ENCODE measurements at regions of chr20 and their contacts with region 1.

Region 1: DNA sequence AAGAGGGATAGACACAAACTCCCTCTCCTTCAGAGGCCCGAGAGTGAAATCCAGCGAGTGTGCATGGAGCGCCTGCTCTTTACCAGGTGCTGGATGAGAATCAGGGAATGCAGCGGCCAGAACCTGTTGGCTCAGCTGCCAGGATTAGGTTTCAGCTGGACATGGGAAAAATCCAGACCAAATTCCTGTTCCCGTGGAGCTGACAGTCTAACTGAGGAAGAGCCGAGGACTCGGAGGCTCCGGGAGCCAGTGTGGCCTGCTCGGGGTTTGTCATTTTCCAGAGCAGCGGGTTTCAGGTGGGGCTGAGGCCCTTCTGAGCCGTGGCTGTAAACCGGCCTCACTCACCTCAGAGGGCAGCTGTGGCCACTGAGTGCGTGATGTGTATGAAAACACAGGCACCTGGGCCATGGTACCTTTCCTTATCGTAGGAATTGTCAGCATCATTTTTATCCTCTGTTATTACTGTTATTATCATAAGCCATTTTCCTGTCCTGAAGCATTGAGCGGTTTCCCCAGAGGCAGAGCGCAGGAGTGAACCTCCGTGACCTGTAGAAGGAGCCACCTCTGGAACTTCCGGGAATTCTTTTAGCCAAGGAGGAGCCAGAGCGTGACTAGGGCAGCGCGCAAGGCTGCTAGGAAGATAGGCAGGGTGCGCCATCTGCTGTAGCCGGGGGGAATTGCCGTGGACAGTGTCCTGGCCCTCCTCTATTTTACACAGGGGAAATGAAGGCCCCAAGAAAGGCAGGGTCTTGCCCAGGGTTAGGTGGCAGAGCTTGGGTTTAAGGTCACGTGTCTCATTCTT is 27.3 kb downstream of the PKIG start:
- DNase-seq: peak; percentile 95
- ATAC-seq: peak; percentile 97
- H3K4me3 ChIP-seq: peak overlapping the region; percentile 68 to 79 (median 74)
- H3K27ac ChIP-seq: peak overlapping the region; percentile 57
- H3K4me1 ChIP-seq: peaks cover 16% of the 10 kb centered on the region
- H3K27me3 ChIP-seq: no peaks in the 10 kb centered on the region; a peak in 1 of 5 replicates
- CTCF ChIP-seq: peak; percentile 100
- EP300 ChIP-seq: peak; percentile 28 to 40; a peak in 2 of 4 replicates
- POLR2A ChIP-seq: peak; percentile 77 to 78
- RAD21 ChIP-seq: peak; percentile 99

Region 2: GRCh38 chr20:44217342-44218092 is 392.2 kb before region 1 on chr20:
- CTCF ChIA-PET with region 1: interaction called, 11 read pairs
- POLR2A ChIA-PET with region 1: no interaction called
- in situ Hi-C with region 1: loop called (anchors 5 kb)
- intact Hi-C with region 1: no loop called
- DNase-seq: peak; percentile 82
- ATAC-seq: peak; percentile 84
- H3K4me3 ChIP-seq: no peak overlapping the region
- H3K27ac ChIP-seq: no peak overlapping the region
- H3K4me1 ChIP-seq: peaks cover 28% of the 10 kb centered on the region
- H3K27me3 ChIP-seq: no peaks in the 10 kb centered on the region
- CTCF ChIP-seq: peak; percentile 99
- EP300 ChIP-seq: no peak
- POLR2A ChIP-seq: no peak
- RAD21 ChIP-seq: peak; percentile 98

Region 3: GRCh38 chr20:44521484-44522481 is 87.9 kb before region 1 on chr20 and contains the start of gene SERINC3:
- CTCF ChIA-PET with region 1: interaction called, 8 read pairs
- POLR2A ChIA-PET with region 1: interaction called, 5 read pairs
- in situ Hi-C with region 1: no loop called
- intact Hi-C with region 1: loop called (anchors 5 kb)
- DNase-seq: peak; percentile 94
- ATAC-seq: peak; percentile 99
- H3K4me3 ChIP-seq: peak within 1 kb of the TSS; percentile 85 to 96 (median 89)
- H3K27ac ChIP-seq: peak within 1 kb of the TSS; percentile 84
- H3K4me1 ChIP-seq: peaks cover 77% of the 10 kb centered on the region
- H3K27me3 ChIP-seq: peaks cover 0 to 7% of the 10 kb centered on the region in 2 experiments; a peak in 1 of 5 replicates
- CTCF ChIP-seq: peak; percentile 6
- EP300 ChIP-seq: no peak; a peak in 2 of 4 replicates
- POLR2A ChIP-seq: peak; percentile 79 to 94
- RAD21 ChIP-seq: peak; percentile 56
- total RNA-seq, gene SERINC3: 53.5 and 82.0 TPM in 2 replicates

Region 4: DNA sequence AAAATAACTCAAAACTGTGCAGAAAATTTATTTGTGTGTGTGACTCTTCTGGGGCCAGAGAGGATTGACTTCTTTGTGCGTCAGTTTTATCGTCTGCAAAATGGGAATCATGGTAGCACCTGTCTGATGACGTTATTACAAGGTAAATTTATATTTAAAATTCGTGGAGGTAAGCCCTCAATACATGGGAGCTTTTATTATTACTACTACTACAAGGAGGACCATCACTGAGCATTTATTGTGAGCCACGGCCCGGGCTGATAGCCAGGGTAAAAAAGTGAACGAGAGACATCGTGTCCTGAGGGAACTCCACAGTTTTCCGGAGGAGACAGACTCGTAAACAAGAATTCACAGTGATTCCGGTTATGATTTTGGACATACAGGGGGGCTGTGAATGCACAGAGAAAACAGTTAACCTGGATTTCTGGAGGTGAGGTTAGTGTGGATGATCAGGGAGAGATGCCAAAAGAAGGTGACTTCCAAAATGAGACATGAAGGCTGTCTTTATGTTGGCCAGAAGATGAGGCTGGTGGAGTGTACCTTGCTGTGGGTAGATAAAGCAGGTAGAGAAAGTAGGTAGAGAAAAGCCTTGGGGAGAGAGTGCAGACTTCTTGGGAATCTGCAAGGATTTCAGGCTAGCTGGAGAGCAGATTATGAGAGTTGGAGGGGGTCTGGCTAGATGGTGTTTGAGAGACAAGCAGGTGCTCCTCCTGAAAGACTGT is 77.3 kb before region 1 on chr20:
- CTCF ChIA-PET with region 1: interaction called, 11 read pairs
- POLR2A ChIA-PET with region 1: interaction called, 4 read pairs
- in situ Hi-C with region 1: no loop called
- intact Hi-C with region 1: loop called (anchors 1 kb)
- DNase-seq: no peak
- ATAC-seq: peak; percentile 10
- H3K4me3 ChIP-seq: peak overlapping the region; percentile 74 to 99 (median 83)
- H3K27ac ChIP-seq: peak overlapping the region; percentile 87
- H3K4me1 ChIP-seq: peaks cover 63% of the 10 kb centered on the region
- H3K27me3 ChIP-seq: no peaks in the 10 kb centered on the region; a peak in 1 of 5 replicates
- CTCF ChIP-seq: no peak
- EP300 ChIP-seq: no peak
- POLR2A ChIP-seq: no peak
- RAD21 ChIP-seq: no peak

Region 5: DNA sequence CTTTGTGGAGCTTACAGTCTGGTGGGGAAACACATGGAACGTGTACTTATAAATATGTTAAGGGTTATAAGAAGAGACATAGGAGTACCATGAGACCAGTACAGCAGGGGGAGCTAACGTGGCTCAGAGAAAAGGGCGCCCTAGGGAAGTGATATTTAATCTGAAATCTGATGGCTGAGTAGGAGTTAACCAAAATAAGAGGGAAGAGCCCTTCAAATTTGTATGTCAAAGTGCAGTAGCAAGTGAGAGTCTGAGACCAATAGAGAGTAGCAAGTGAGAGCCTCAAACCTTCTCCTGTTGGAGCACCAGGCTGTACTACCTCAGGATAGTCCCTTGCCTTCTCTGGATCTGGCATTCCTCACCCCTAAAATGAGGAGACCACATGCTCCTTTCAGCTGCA is 33.4 kb before region 1 on chr20:
- CTCF ChIA-PET with region 1: interaction called, 14 read pairs
- POLR2A ChIA-PET with region 1: no interaction called
- in situ Hi-C with region 1: no loop called
- intact Hi-C with region 1: loop called (anchors 2 kb)
- DNase-seq: peak; percentile 21
- ATAC-seq: peak; percentile 72
- H3K4me3 ChIP-seq: no peak overlapping the region
- H3K27ac ChIP-seq: no peak overlapping the region
- H3K4me1 ChIP-seq: peaks cover 10% of the 10 kb centered on the region; the same call in 1 of the 2 replicates
- H3K27me3 ChIP-seq: no peaks in the 10 kb centered on the region
- CTCF ChIP-seq: peak; percentile 38
- EP300 ChIP-seq: no peak
- POLR2A ChIP-seq: no peak
- RAD21 ChIP-seq: no peak

Region 6: GRCh38 chr20:44629542-44629941 is 19.8 kb after region 1 on chr20:
- CTCF ChIA-PET with region 1: no interaction called
- POLR2A ChIA-PET with region 1: no interaction called
- in situ Hi-C with region 1: no loop called
- intact Hi-C with region 1: no loop called
- DNase-seq: no peak
- ATAC-seq: no peak
- H3K4me3 ChIP-seq: no peak overlapping the region
- H3K27ac ChIP-seq: no peak overlapping the region
- H3K4me1 ChIP-seq: no peaks in the 10 kb centered on the region
- H3K27me3 ChIP-seq: no peaks in the 10 kb centered on the region
- CTCF ChIP-seq: no peak
- EP300 ChIP-seq: no peak
- POLR2A ChIP-seq: no peak
- RAD21 ChIP-seq: no peak

Measured in HepG2 (cell line).